ENCODE measurements at regions of chr10 and their contacts with region 1.

Region 1: DNA sequence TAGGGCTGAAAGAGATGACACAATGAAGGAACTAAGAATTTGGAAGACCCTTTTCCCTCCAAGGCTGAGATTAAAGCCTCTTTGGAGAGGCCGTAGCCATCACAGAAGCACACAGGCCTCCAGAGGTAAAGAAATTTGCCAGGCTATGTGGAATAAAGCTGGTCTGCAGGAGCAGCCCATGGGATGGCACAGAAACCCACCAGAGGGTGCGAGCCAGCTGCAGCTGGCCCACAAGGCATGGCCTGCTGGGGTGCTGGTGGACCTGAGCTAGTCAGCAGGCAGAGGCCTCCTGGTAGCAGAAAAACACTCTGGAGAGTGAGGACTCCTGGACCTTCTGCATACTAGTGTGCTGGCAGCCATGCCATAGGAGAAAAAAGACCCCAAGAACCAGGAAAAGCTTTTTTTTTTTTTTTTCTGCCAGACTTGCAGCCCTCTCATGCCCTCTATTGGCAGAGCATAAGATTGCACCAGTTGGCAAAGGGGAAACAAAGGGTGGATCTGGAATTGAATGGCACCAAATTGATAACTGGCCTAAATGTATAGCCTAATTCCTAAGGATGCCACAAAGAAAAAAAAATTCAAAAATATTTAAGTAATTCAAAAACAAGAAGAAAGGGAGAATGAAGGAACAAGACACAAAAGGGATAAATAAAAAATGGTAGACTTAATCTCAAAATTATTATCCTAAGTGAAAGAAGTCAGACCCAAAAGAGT is 112.6 kb upstream of the GHITM start:
- DNase-seq: no peak
- ATAC-seq: 0 out of 3 replicates have a peak, but pooled peaks have one; percentile 31
- H3K4me3 ChIP-seq: no peak overlapping the region
- H3K27ac ChIP-seq: no peak overlapping the region
- H3K4me1 ChIP-seq: no peaks in the 10 kb centered on the region
- H3K27me3 ChIP-seq: no peaks in the 10 kb centered on the region
- CTCF ChIP-seq: peak; percentile 62 to 88 (median 80)
- EP300 ChIP-seq: no peak
- POLR2A ChIP-seq: no peak
- RAD21 ChIP-seq: peak; percentile 77

Region 2: GRCh38 chr10:84015877-84016595 is 10.7 kb before region 1 on chr10:
- CTCF ChIA-PET with region 1: interaction called, 16 read pairs
- POLR2A ChIA-PET with region 1: no interaction called
- RAD21 ChIA-PET with region 1: no interaction called
- SMC1A ChIA-PET with region 1: no interaction called
- in situ Hi-C with region 1: no loop called
- intact Hi-C with region 1: no loop called
- DNase-seq: no peak
- ATAC-seq: no peak
- H3K4me3 ChIP-seq: no peak overlapping the region
- H3K27ac ChIP-seq: no peak overlapping the region
- H3K4me1 ChIP-seq: peaks cover 10% of the 10 kb centered on the region
- H3K27me3 ChIP-seq: no peaks in the 10 kb centered on the region
- CTCF ChIP-seq: no peak
- EP300 ChIP-seq: no peak
- POLR2A ChIP-seq: no peak
- RAD21 ChIP-seq: no peak

Measured in GM12878 (cell line).